CD14-positive monocyte (primary cell): ENCODE measurements at regions of chr2 and their contacts with region 1.

Region 1: GRCh38 chr2:199979832-199980628 is 24.6 kb downstream of the MAIP1 start:
- DNase-seq: peak; percentile 48 to 64 (median 57)
- H3K4me3 ChIP-seq: no peak overlapping the region
- H3K4me3 Mint-ChIP-seq: peak overlapping the region in 1 of 2 donors; percentile 9
- H3K27ac ChIP-seq: no peak overlapping the region
- H3K27ac Mint-ChIP-seq: no peak overlapping the region
- H3K4me1 ChIP-seq: no peaks in the 10 kb centered on the region
- H3K4me1 Mint-ChIP-seq: peaks cover 7% of the 10 kb centered on the region
- H3K27me3 ChIP-seq: no peaks in the 10 kb centered on the region
- H3K27me3 Mint-ChIP-seq: peaks cover 2 to 4% (median 2%) of the 10 kb centered on the region in 3 donors
- CTCF ChIP-seq: peak; percentile 84

Region 2: DNA sequence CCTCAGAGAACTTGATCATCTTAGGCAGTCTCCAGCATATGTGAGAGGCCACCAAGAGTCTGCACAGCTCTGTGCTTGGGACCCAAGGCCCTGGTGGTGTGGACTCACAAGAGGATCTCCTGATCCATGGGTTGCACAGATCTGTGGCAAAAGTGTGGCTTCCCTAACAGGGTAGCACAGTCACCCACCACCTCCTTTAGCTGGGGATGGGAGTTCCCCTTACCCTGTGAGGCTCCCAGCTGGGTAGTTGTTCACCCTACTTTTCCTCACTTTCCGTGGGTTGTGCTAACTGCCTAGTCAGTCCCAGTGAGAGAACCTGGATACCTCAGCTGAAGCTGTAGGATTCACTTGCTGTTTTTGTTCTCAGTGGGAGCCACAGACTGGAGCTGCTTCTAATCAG is 252.7 kb before region 1 on chr2:
- intact Hi-C with region 1: no loop called
- DNase-seq: no peak
- H3K4me3 ChIP-seq: no peak overlapping the region
- H3K4me3 Mint-ChIP-seq: no peak overlapping the region
- H3K27ac ChIP-seq: no peak overlapping the region
- H3K27ac Mint-ChIP-seq: no peak overlapping the region
- H3K4me1 ChIP-seq: no peaks in the 10 kb centered on the region
- H3K4me1 Mint-ChIP-seq: peaks cover 3% of the 10 kb centered on the region
- H3K27me3 ChIP-seq: no peaks in the 10 kb centered on the region
- H3K27me3 Mint-ChIP-seq: no peaks in the 10 kb centered on the region
- CTCF ChIP-seq: no peak

Region 3: GRCh38 chr2:200110381-200110780 is 130.4 kb after region 1 on chr2:
- intact Hi-C with region 1: no loop called
- DNase-seq: no peak
- H3K4me3 ChIP-seq: no peak overlapping the region
- H3K4me3 Mint-ChIP-seq: no peak overlapping the region
- H3K27ac ChIP-seq: no peak overlapping the region
- H3K27ac Mint-ChIP-seq: no peak overlapping the region
- H3K4me1 ChIP-seq: no peaks in the 10 kb centered on the region
- H3K4me1 Mint-ChIP-seq: no peaks in the 10 kb centered on the region
- H3K27me3 ChIP-seq: no peaks in the 10 kb centered on the region
- H3K27me3 Mint-ChIP-seq: peaks cover 0 to 3% (median 1%) of the 10 kb centered on the region in 3 donors
- CTCF ChIP-seq: no peak

Region 4: DNA sequence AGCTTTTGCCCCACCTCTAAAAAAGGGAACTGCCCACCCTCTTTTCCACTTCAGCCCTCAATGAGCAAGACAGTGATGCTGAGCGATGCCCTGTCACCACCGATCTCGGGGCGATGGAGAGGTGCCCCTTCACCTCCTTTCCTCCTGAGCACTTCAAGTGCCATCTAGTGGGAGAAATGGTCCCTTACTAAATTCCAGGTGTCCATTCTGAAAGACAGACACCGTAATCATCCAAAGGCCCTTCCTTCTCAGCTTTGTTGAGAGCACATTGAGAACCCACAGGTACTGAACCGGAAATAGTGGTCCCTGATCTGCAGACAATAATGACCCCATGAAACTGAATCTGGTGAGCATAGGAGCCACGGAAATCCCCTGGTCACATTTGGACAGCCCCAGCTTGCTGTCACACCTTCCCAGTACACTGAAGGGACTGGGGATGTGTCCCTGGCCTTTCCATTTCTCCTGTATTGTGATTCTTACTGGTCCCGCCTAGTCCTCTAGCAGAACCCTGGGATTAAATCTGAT is 491.4 kb after region 1 on chr2:
- intact Hi-C with region 1: loop called in 1 of 2 experiments (anchors 5 kb)
- DNase-seq: peak in 1 of 3 donors; percentile 24
- H3K4me3 ChIP-seq: no peak overlapping the region
- H3K4me3 Mint-ChIP-seq: no peak overlapping the region
- H3K27ac ChIP-seq: no peak overlapping the region
- H3K27ac Mint-ChIP-seq: peak overlapping the region in 1 of 7 donors; percentile 32
- H3K4me1 ChIP-seq: no peaks in the 10 kb centered on the region
- H3K4me1 Mint-ChIP-seq: peaks cover 3% of the 10 kb centered on the region
- H3K27me3 ChIP-seq: no peaks in the 10 kb centered on the region
- H3K27me3 Mint-ChIP-seq: no peaks in the 10 kb centered on the region
- CTCF ChIP-seq: peak; percentile 30

Region 5: DNA sequence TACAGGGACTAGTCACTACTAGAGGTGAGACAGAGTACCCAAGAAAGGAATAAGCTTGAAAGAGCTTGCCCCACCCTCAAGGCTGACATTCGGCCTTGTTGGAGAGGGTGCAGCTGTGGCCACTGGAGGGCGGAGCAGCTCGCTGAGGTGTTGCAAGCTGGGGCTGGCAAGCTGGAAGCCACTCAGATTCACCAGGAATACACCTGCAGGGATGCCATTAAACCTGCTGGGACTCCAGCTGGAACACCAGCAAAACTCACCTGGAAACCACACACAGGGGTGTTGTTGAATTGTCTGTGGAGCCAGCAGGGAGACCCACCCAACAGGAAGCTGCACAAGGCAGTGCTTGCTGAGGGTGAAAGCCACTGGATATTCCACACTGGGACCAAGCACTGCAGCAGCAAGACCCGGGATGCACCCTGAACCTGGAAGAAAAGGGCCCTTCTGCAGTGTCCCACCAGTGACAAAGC is 503.7 kb after region 1 on chr2:
- intact Hi-C with region 1: loop called in 1 of 2 experiments (anchors 5 kb)
- DNase-seq: no peak
- H3K4me3 ChIP-seq: no peak overlapping the region
- H3K4me3 Mint-ChIP-seq: no peak overlapping the region
- H3K27ac ChIP-seq: no peak overlapping the region
- H3K27ac Mint-ChIP-seq: no peak overlapping the region
- H3K4me1 ChIP-seq: no peaks in the 10 kb centered on the region
- H3K4me1 Mint-ChIP-seq: no peaks in the 10 kb centered on the region
- H3K27me3 ChIP-seq: no peaks in the 10 kb centered on the region
- H3K27me3 Mint-ChIP-seq: peaks cover 0 to 5% (median 0%) of the 10 kb centered on the region in 3 donors
- CTCF ChIP-seq: peak; percentile 17